ENCODE measurements at regions of chr2 and their contacts with region 1.

Region 1: GRCh38 chr2:101983928-101984327 is 7.8 kb upstream of the IL1R2 start:
- DNase-seq: peak; percentile 8
- H3K4me3 ChIP-seq: no peak overlapping the region
- H3K27ac ChIP-seq: no peak overlapping the region
- H3K4me1 ChIP-seq: peaks cover 73% of the 10 kb centered on the region
- H3K27me3 ChIP-seq: no peaks in the 10 kb centered on the region
- CTCF ChIP-seq: peak; percentile 39 to 69

Region 2: DNA sequence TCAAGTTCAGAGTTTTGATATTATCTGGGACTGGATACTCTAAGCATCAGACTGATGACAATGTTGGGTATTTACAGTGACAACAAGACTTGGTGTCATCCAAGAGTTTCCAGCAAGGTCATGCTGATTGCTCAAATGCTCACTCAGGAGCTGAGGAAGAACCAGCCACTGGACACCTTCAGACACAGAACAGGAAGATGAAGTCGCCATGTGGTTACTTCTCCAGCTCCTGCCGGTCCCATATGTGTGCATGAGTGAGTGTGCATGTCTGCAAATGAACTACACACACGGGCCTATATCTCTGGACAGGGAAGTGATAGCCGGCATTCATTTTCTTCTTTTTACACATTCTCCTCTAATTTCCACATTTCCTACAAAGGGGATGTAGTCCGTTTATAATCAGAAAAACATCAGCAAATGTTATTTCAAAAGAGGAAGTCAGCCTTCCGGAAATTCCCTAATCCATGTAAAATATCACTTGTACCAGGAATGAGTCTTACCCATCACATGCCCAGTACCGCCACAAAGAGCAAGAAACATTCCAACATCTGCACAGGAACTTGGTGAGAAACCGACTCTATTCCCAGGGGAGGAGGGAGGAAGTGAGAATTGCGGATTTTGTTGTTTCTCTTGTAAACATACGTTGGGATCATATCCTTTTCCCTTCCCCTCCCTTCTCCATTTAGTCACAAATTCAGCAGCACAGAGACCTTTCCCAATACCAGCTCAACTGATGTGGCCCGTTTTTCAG is 519.9 kb before region 1 on chr2:
- CTCF ChIA-PET with region 1: no interaction called
- dilution Hi-C with region 1: no loop called
- in situ Hi-C with region 1: no loop called
- intact Hi-C with region 1: no loop called
- DNase-seq: no peak
- H3K4me3 ChIP-seq: no peak overlapping the region
- H3K27ac ChIP-seq: no peak overlapping the region
- H3K4me1 ChIP-seq: no peaks in the 10 kb centered on the region
- H3K27me3 ChIP-seq: no peaks in the 10 kb centered on the region
- CTCF ChIP-seq: no peak

Region 3: DNA sequence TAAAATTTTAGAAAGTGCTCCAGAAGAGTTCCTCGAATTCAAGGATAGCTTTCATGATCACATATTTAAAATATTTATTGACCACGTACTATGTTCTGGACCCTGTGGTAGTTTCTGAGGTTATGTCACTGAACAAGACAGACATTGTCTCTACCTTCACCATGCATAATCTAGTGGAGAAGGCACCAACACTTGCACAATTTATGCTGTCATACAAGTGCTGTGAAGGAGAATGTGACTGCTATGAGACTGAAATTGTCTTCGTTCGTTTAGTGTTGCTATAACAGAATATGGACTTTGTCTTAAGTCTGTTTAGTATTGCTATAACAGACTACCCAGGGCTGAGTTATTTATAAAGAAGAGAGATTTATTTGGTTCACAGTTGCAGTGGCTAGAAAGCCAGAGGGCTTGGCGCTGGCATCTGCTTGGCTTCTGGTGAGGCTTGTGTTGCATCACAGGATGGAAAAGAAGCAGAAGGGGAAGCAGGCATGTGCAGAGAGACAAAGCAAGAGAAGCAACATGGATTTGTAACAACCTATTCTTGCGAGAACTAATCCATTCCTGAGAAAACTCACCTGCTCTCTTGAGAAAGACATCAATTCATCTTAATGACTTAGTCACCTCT is 459.0 kb before region 1 on chr2:
- CTCF ChIA-PET with region 1: no interaction called
- dilution Hi-C with region 1: no loop called
- in situ Hi-C with region 1: no loop called
- intact Hi-C with region 1: no loop called
- DNase-seq: peak; percentile 31
- H3K4me3 ChIP-seq: no peak overlapping the region
- H3K27ac ChIP-seq: no peak overlapping the region
- H3K4me1 ChIP-seq: peaks cover 31% of the 10 kb centered on the region
- H3K27me3 ChIP-seq: no peaks in the 10 kb centered on the region
- CTCF ChIP-seq: no peak

Region 4: GRCh38 chr2:101900375-101900774 is 83.6 kb before region 1 on chr2:
- CTCF ChIA-PET with region 1: no interaction called
- dilution Hi-C with region 1: no loop called
- in situ Hi-C with region 1: no loop called
- intact Hi-C with region 1: loop called (anchors 5 kb)
- DNase-seq: no peak
- H3K4me3 ChIP-seq: no peak overlapping the region
- H3K27ac ChIP-seq: peak overlapping the region; percentile 60
- H3K4me1 ChIP-seq: peaks cover 28% of the 10 kb centered on the region
- H3K27me3 ChIP-seq: no peaks in the 10 kb centered on the region
- CTCF ChIP-seq: no peak

Measured in mammary epithelial cell (primary cell).